H1 (cell line): ENCODE measurements at regions of chr5 and their contacts with region 1.

Region 1: DNA sequence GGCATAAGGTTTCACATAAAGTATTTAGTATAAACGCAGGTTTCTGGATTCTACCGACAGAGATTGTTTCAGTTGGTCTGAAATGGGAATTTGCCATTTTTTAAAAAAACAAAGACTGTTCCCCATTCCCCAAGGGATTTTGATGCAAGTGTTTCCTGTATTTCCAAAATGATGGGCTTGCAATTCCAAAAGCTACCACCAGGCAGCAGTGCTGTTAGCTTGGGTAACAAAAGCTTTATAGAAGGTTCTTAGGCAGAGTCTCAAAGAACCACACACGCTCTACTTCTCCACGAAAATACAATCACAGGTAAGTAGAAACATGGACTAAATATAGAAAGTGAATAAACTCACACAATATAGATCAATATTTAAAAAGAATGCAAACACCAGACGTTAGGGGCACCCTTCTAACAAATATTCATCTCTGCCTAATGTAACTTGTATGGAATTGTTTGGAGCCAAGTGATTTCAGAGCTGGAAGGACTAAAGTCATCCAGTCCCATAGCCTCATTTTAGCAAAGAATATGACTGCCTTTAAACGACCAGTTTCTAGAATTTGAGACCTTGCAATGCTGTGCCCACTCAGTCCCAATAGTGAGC is 154.3 kb downstream of the SPOCK1 start:
- DNase-seq: peak; percentile 9 to 82
- H3K4me3 ChIP-seq: no peak overlapping the region
- H3K27ac ChIP-seq: no peak overlapping the region
- H3K4me1 ChIP-seq: peaks cover 0 to 5% (median 2%) of the 10 kb centered on the region in 4 experiments; a peak in 2 of 7 replicates
- H3K27me3 ChIP-seq: no peaks in the 10 kb centered on the region
- CTCF ChIP-seq: peak in 2 of 3 experiments; percentile 78 to 86; a peak in 3 of 4 replicates
- EP300 ChIP-seq: no peak
- POLR2A ChIP-seq: no peak
- RAD21 ChIP-seq: peak; percentile 77 to 83

Region 2: GRCh38 chr5:137192293-137192743 is 152.5 kb before region 1 on chr5:
- CTCF ChIA-PET with region 1: no interaction called
- POLR2A ChIA-PET with region 1: no interaction called
- DNase-seq: no peak
- H3K4me3 ChIP-seq: no peak overlapping the region
- H3K27ac ChIP-seq: no peak overlapping the region
- H3K4me1 ChIP-seq: no peaks in the 10 kb centered on the region
- H3K27me3 ChIP-seq: no peaks in the 10 kb centered on the region
- CTCF ChIP-seq: no peak
- EP300 ChIP-seq: no peak
- POLR2A ChIP-seq: no peak
- RAD21 ChIP-seq: no peak

Region 3: GRCh38 chr5:137260820-137261695 is 83.8 kb before region 1 on chr5:
- CTCF ChIA-PET with region 1: no interaction called
- POLR2A ChIA-PET with region 1: no interaction called
- DNase-seq: no peak
- H3K4me3 ChIP-seq: no peak overlapping the region
- H3K27ac ChIP-seq: no peak overlapping the region
- H3K4me1 ChIP-seq: no peaks in the 10 kb centered on the region
- H3K27me3 ChIP-seq: no peaks in the 10 kb centered on the region
- CTCF ChIP-seq: no peak
- EP300 ChIP-seq: no peak
- POLR2A ChIP-seq: no peak
- RAD21 ChIP-seq: no peak

Region 4: GRCh38 chr5:137279521-137280030 is 65.2 kb before region 1 on chr5:
- CTCF ChIA-PET with region 1: no interaction called
- POLR2A ChIA-PET with region 1: no interaction called
- DNase-seq: no peak
- H3K4me3 ChIP-seq: no peak overlapping the region
- H3K27ac ChIP-seq: no peak overlapping the region
- H3K4me1 ChIP-seq: no peaks in the 10 kb centered on the region
- H3K27me3 ChIP-seq: no peaks in the 10 kb centered on the region
- CTCF ChIP-seq: no peak
- EP300 ChIP-seq: no peak
- POLR2A ChIP-seq: no peak
- RAD21 ChIP-seq: no peak

Region 5: GRCh38 chr5:137328463-137328862 is 16.4 kb before region 1 on chr5:
- CTCF ChIA-PET with region 1: interaction called, 33 read pairs
- POLR2A ChIA-PET with region 1: no interaction called
- DNase-seq: no peak
- H3K4me3 ChIP-seq: no peak overlapping the region
- H3K27ac ChIP-seq: no peak overlapping the region
- H3K4me1 ChIP-seq: peaks cover 0 to 5% (median 2%) of the 10 kb centered on the region in 4 experiments; a peak in 2 of 7 replicates
- H3K27me3 ChIP-seq: no peaks in the 10 kb centered on the region
- CTCF ChIP-seq: no peak
- EP300 ChIP-seq: no peak
- POLR2A ChIP-seq: no peak
- RAD21 ChIP-seq: no peak

Region 6: DNA sequence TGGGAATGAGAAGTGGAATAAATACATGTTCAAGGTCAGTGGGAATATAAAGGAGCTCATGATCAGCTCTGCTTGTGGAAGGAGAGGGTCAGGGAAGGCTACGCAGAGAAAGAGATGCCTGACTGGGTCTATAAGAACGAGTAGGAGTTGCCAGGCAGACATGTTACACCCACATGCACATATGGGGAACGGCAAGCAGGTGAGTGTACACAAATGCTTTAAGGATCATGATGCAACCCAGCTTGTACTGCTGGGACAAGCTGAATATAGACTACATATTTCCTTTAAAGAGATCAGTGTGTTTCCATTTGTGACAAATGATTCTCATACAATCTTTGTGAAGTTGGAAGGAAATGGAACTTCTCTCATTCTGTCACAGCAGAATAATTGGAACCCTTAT is 12.6 kb after region 1 on chr5:
- CTCF ChIA-PET with region 1: interaction called, 22 read pairs
- POLR2A ChIA-PET with region 1: interaction called, 3 read pairs
- DNase-seq: no peak
- H3K4me3 ChIP-seq: no peak overlapping the region
- H3K27ac ChIP-seq: no peak overlapping the region
- H3K4me1 ChIP-seq: no peaks in the 10 kb centered on the region
- H3K27me3 ChIP-seq: no peaks in the 10 kb centered on the region
- CTCF ChIP-seq: no peak
- EP300 ChIP-seq: no peak
- POLR2A ChIP-seq: no peak
- RAD21 ChIP-seq: no peak

Region 7: DNA sequence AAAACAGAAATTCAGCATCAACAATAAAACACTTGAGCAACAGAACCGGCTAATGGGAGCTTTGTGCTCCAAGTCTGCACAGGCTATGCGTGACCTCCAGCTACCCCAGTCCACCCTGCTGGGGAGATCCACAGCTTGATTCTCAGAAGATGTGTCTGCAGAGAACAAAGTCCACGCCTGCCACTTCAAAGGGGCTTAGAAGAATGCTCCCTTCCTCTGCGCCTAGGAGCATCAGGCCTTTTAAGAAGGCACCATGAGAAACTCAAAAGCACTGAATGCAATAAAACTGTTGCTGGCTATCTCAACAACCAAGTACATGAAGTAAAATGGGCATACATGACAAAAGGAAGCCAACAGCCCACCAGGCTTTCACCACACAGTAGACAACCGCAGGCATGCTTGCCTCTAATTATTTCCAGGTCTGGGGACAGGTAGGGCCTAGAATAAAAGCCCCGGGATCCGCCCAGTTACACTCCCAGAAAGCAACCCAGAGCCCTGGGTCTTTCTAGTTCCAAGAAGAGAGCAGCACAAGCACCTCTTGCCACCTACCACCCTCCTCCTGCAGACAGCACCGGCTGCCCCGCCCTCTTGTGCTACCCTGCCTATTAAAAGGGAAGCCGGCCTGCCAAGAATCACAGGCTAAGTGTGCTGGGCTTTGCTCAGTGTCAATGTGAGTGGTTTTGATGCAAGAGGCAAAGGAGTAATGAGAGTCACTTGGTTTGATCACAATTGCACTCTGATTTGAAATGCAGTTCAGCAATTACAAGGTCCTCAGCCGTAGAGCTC is 31.1 kb after region 1 on chr5:
- CTCF ChIA-PET with region 1: interaction called, 11 read pairs
- POLR2A ChIA-PET with region 1: no interaction called
- DNase-seq: no peak
- H3K4me3 ChIP-seq: no peak overlapping the region
- H3K27ac ChIP-seq: no peak overlapping the region
- H3K4me1 ChIP-seq: no peaks in the 10 kb centered on the region; a peak in 2 of 7 replicates
- H3K27me3 ChIP-seq: no peaks in the 10 kb centered on the region
- CTCF ChIP-seq: no peak
- EP300 ChIP-seq: no peak
- POLR2A ChIP-seq: no peak
- RAD21 ChIP-seq: no peak

Region 8: DNA sequence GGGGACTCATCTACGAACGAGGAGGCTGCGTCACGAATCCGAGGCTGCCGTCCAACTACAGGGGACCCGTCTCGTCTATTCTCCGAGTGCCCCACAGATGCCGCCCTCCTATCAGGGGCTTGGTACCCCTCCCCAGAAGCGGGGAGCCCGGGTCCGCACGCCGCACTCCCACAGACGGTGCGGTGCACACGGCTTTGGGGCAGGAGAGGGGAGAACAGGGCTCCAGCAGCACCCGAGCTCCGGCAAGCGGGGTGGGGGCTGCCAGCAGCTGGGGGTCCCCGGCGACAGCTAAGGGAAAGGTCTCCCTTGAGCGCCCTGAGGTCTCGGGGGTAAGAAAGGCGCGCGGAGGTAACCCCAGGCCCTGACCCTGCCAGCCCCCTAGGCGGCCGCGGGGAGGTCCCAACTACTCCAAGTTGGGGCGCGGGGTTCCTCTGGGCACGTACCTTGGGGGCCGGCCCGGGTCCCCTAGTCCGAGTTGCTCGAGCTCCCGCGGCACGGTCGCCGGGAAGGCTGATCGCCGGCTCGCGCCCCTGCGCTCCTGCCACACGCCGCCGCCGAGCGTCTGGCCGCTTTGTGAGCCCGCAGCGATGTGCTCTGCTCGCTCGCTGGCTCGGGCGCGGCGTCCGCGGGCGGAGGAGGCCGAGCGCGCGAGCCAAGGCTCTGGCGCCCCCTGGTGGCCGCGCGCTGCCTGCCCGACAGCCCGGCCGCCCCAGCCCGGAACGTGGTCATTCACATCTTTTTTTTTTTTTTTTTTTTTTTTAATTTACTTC is 154.1 kb after region 1 on chr5 and contains the start of gene SPOCK1:
- CTCF ChIA-PET with region 1: interaction called, 32 read pairs
- POLR2A ChIA-PET with region 1: interaction called, 4 read pairs
- DNase-seq: peak; percentile 27 to 87
- H3K4me3 ChIP-seq: peak within 1 kb of the TSS; percentile 50 to 93 (median 74)
- H3K27ac ChIP-seq: no peak within 1 kb of the TSS
- H3K4me1 ChIP-seq: no peaks in the 10 kb centered on the region; a peak in 1 of 7 replicates
- H3K27me3 ChIP-seq: peaks cover 11 to 25% (median 18%) of the 10 kb centered on the region in 4 experiments
- CTCF ChIP-seq: peak; percentile 70 to 85 (median 75)
- EP300 ChIP-seq: no peak
- POLR2A ChIP-seq: 0 out of 3 replicates have a peak, but pooled peaks of 1 of the 2 experiments have one; percentile 32
- RAD21 ChIP-seq: peak; percentile 67 to 82
- total RNA-seq, gene SPOCK1: 14.0 and 18.1 TPM in 2 replicates